MCF 10A (cell line): ENCODE measurements at regions of chr13 and their contacts with region 1.

Region 1: GRCh38 chr13:79560953-79561352 is 80.0 kb downstream of the NDFIP2 start:
- DNase-seq: peak; percentile 21
- H3K4me3 Mint-ChIP-seq: no peak overlapping the region
- H3K27ac Mint-ChIP-seq: no peak overlapping the region
- H3K4me1 Mint-ChIP-seq: no peaks in the 10 kb centered on the region
- H3K27me3 Mint-ChIP-seq: no peaks in the 10 kb centered on the region
- CTCF ChIP-seq: no peak

Region 2: DNA sequence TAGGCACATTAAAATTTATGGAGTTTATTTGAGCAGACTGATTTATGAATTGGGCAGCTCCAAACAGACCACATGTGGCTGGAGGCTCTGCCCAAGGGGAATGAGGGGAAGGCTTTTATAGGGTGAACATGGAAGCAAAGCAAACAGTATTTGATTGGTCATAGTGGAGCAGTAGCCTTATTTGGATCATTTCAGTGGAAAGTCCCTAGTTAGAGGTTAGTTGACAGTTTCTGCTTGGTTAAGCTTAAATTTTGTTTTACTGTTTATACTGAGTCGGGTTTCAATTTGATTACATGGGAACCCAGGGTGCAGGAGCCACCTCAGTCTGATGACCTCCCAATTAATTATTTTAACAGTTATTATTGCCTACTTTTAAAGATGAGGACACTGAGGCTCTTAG is 60.5 kb after region 1 on chr13:
- CTCF ChIA-PET with region 1: no interaction called
- POLR2A ChIA-PET with region 1: no interaction called
- intact Hi-C with region 1: loop called (anchors 10 kb)
- DNase-seq: no peak
- H3K4me3 Mint-ChIP-seq: no peak overlapping the region
- H3K27ac Mint-ChIP-seq: peak overlapping the region; percentile 80
- H3K4me1 Mint-ChIP-seq: peaks cover 29% of the 10 kb centered on the region
- H3K27me3 Mint-ChIP-seq: no peaks in the 10 kb centered on the region
- CTCF ChIP-seq: no peak